CD4-positive, alpha-beta T cell (primary cell): ENCODE measurements at regions of chr13 and their contacts with region 1.

Region 1: DNA sequence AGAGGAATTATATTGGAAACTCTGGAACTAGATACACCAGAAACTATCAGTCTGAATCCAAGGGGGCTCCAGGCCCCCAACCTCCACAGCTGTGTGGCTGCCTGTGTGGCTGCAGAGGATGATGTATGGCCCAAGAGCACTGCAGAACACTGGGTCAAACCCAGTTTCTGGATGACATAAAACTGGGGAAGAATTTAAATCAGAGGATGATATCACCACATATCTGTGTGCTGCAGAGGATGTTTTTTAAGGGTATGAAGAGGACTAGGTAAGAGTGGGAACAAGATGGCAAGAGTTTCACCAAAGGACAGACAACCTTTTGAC is 226.4 kb downstream of the SUCLA2 start:
- DNase-seq: no peak
- ATAC-seq: no peak
- H3K4me3 ChIP-seq: no peak overlapping the region
- H3K4me3 Mint-ChIP-seq: no peak overlapping the region
- H3K27ac ChIP-seq: no peak overlapping the region
- H3K27ac Mint-ChIP-seq: no peak overlapping the region
- H3K4me1 ChIP-seq: no peaks in the 10 kb centered on the region
- H3K4me1 Mint-ChIP-seq: no peaks in the 10 kb centered on the region
- H3K27me3 ChIP-seq: peaks cover 2 to 3% of the 10 kb centered on the region in 2 experiments
- H3K27me3 Mint-ChIP-seq: peaks cover 18% of the 10 kb centered on the region
- CTCF ChIP-seq: no peak

Region 2: DNA sequence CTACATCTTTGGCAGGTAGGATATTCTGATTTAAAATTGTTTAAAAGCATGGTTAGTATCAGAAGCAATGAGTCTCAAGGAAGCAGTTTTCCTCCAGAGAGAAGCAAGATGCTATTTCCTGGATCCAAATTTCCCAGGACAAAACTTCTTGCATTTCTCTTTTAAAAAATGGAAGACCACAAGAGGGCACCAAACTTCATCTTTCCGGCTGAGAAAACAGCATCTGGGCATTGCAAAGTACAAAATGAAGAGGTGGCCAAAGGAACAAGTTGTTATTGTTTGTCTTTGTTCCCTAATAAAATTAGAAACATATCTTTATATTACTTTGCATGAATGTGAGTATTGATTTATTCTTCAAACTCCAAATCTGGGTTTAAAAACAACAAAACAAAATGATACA is 1281.7 kb before region 1 on chr13:
- CTCF ChIA-PET with region 1: no interaction called
- POLR2A ChIA-PET with region 1: no interaction called
- intact Hi-C with region 1: loop called in 1 of 2 experiments (anchors 2 kb)
- DNase-seq: peak in 3 of 14 experiments; percentile 38 to 56 (median 54)
- ATAC-seq: no peak
- H3K4me3 ChIP-seq: no peak overlapping the region
- H3K4me3 Mint-ChIP-seq: no peak overlapping the region
- H3K27ac ChIP-seq: no peak overlapping the region
- H3K27ac Mint-ChIP-seq: no peak overlapping the region
- H3K4me1 ChIP-seq: no peaks in the 10 kb centered on the region
- H3K4me1 Mint-ChIP-seq: no peaks in the 10 kb centered on the region
- H3K27me3 ChIP-seq: peaks cover 0 to 3% of the 10 kb centered on the region in 2 experiments
- H3K27me3 Mint-ChIP-seq: peaks cover 5% of the 10 kb centered on the region
- CTCF ChIP-seq: peak; percentile 75

Region 3: DNA sequence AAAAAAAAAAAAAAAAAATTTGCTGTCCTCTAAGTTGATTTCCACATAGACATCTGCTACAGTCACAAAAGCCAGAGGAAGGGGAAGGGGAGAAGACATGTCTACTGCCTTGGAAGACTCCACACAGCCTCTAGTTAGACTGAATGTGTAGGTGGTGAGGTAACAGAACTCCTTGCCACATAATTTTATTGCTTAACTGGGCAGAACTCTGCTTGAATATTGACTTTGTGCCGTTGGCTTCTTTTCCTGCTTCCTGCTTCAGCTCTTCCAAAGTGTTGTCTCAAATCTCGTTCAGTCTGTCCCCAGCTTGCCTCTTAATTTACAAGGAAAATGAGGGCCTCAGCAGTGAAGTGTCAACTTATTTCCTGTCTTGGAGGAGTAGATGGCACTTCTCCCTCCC is 1014.8 kb before region 1 on chr13:
- CTCF ChIA-PET with region 1: no interaction called
- POLR2A ChIA-PET with region 1: no interaction called
- intact Hi-C with region 1: loop called in 1 of 2 experiments (anchors 10 kb)
- DNase-seq: no peak
- ATAC-seq: no peak
- H3K4me3 ChIP-seq: no peak overlapping the region
- H3K4me3 Mint-ChIP-seq: no peak overlapping the region
- H3K27ac ChIP-seq: no peak overlapping the region
- H3K27ac Mint-ChIP-seq: no peak overlapping the region
- H3K4me1 ChIP-seq: no peaks in the 10 kb centered on the region
- H3K4me1 Mint-ChIP-seq: no peaks in the 10 kb centered on the region
- H3K27me3 ChIP-seq: no peaks in the 10 kb centered on the region
- H3K27me3 Mint-ChIP-seq: no peaks in the 10 kb centered on the region
- CTCF ChIP-seq: no peak

Region 4: GRCh38 chr13:46831588-46832194 is 942.9 kb before region 1 on chr13:
- CTCF ChIA-PET with region 1: no interaction called
- POLR2A ChIA-PET with region 1: no interaction called
- intact Hi-C with region 1: loop called in 1 of 2 experiments (anchors 5 kb)
- DNase-seq: peak in 8 of 14 experiments; percentile 3 to 57 (median 18)
- ATAC-seq: no peak
- H3K4me3 ChIP-seq: no peak overlapping the region
- H3K4me3 Mint-ChIP-seq: no peak overlapping the region
- H3K27ac ChIP-seq: no peak overlapping the region
- H3K27ac Mint-ChIP-seq: no peak overlapping the region
- H3K4me1 ChIP-seq: no peaks in the 10 kb centered on the region
- H3K4me1 Mint-ChIP-seq: no peaks in the 10 kb centered on the region
- H3K27me3 ChIP-seq: peaks cover 0 to 6% of the 10 kb centered on the region in 2 experiments
- H3K27me3 Mint-ChIP-seq: peaks cover 7% of the 10 kb centered on the region
- CTCF ChIP-seq: peak; percentile 69